CD8-positive, alpha-beta T cell (primary cell): ENCODE measurements at regions of chr2 and their contacts with region 1.

Region 1: GRCh38 chr2:106582148-106583143 is 95.3 kb downstream of the CD8B2 start:
- DNase-seq: peak; percentile 26 to 74 (median 60)
- ATAC-seq: peak; percentile 83
- H3K4me3 ChIP-seq: peak overlapping the region; percentile 54 to 57
- H3K4me3 Mint-ChIP-seq: peak overlapping the region; percentile 91
- H3K27ac ChIP-seq: no peak overlapping the region
- H3K27ac Mint-ChIP-seq: no peak overlapping the region
- H3K4me1 ChIP-seq: peaks cover 5% of the 10 kb centered on the region
- H3K4me1 Mint-ChIP-seq: peaks cover 15% of the 10 kb centered on the region
- H3K27me3 ChIP-seq: peaks cover 0 to 4% of the 10 kb centered on the region in 2 experiments
- H3K27me3 Mint-ChIP-seq: peaks cover 44% of the 10 kb centered on the region
- CTCF ChIP-seq: peak; percentile 93

Region 2: GRCh38 chr2:105294844-105295481 is 1287.5 kb before region 1 on chr2:
- CTCF ChIA-PET with region 1: no interaction called
- POLR2A ChIA-PET with region 1: no interaction called
- intact Hi-C with region 1: no loop called
- DNase-seq: peak in 3 of 9 experiments; percentile 25 to 27 (median 27)
- ATAC-seq: no peak
- H3K4me3 ChIP-seq: no peak overlapping the region
- H3K4me3 Mint-ChIP-seq: no peak overlapping the region
- H3K27ac ChIP-seq: no peak overlapping the region
- H3K27ac Mint-ChIP-seq: no peak overlapping the region
- H3K4me1 ChIP-seq: no peaks in the 10 kb centered on the region
- H3K4me1 Mint-ChIP-seq: peaks cover 1% of the 10 kb centered on the region
- H3K27me3 ChIP-seq: no peaks in the 10 kb centered on the region
- H3K27me3 Mint-ChIP-seq: no peaks in the 10 kb centered on the region
- CTCF ChIP-seq: no peak

Region 3: DNA sequence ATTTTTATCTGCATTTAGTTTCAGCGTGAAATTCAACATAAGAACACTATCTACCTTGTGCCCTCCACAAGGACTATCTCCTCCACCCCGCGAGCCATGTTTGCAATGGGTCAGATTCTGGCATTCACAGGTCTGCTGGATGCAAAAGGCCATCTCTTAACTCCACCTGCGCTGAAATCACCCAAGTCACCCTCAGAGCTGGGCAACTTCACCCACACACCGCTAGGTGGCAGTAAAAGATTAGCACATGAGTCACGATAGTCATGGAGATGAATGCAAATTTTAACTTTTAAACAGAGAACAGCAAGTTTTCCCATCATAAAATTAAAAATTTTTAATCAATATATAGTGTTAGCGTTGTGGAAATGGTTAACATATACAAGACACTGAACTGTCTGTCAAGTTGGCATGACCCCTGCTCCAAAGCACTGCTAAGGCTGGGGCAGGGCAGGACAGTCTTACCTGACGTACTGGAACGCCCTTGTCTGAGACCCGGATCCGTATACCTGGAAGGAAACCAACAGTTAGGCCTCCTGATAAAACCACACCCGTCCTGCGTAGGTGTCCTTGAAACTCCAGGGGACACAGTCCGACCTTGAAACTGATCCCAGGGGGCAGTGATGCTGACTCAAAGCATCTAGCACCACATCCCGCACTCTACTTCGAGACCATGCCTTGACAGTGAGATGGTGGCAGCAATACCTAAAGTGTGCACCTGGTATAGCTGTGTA is 477.9 kb before region 1 on chr2:
- CTCF ChIA-PET with region 1: no interaction called
- POLR2A ChIA-PET with region 1: no interaction called
- intact Hi-C with region 1: loop called (anchors 1 to 2 kb)
- DNase-seq: peak; percentile 35 to 82 (median 67)
- ATAC-seq: peak; percentile 78
- H3K4me3 ChIP-seq: no peak overlapping the region
- H3K4me3 Mint-ChIP-seq: no peak overlapping the region
- H3K27ac ChIP-seq: no peak overlapping the region
- H3K27ac Mint-ChIP-seq: peak overlapping the region; percentile 78
- H3K4me1 ChIP-seq: no peaks in the 10 kb centered on the region
- H3K4me1 Mint-ChIP-seq: peaks cover 21% of the 10 kb centered on the region
- H3K27me3 ChIP-seq: no peaks in the 10 kb centered on the region
- H3K27me3 Mint-ChIP-seq: no peaks in the 10 kb centered on the region
- CTCF ChIP-seq: peak; percentile 94

Region 4: DNA sequence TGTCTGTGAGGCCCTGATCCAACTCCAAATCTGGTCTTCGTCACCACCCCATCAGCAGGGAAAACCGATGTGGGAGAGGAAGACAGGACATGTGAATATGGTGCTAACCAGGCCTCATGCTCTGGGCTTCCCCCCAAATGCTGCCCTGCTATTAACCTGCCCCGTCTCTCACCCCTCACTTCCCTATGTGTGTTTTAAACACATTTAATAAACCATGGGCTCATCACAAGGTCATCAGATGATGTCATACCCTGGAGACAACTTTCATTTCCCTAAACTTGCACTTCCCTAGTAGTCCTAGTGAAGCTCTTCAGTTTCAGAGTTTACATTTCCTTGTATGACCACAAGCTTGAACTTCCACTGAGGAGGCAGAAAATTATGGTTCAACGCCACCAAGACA is 45.4 kb before region 1 on chr2:
- CTCF ChIA-PET with region 1: no interaction called
- POLR2A ChIA-PET with region 1: no interaction called
- intact Hi-C with region 1: no loop called
- DNase-seq: peak in 1 of 9 experiments; percentile 33
- ATAC-seq: no peak
- H3K4me3 ChIP-seq: no peak overlapping the region
- H3K4me3 Mint-ChIP-seq: no peak overlapping the region
- H3K27ac ChIP-seq: no peak overlapping the region
- H3K27ac Mint-ChIP-seq: no peak overlapping the region
- H3K4me1 ChIP-seq: no peaks in the 10 kb centered on the region
- H3K4me1 Mint-ChIP-seq: no peaks in the 10 kb centered on the region
- H3K27me3 ChIP-seq: no peaks in the 10 kb centered on the region
- H3K27me3 Mint-ChIP-seq: peaks cover 4% of the 10 kb centered on the region
- CTCF ChIP-seq: no peak

Region 5: DNA sequence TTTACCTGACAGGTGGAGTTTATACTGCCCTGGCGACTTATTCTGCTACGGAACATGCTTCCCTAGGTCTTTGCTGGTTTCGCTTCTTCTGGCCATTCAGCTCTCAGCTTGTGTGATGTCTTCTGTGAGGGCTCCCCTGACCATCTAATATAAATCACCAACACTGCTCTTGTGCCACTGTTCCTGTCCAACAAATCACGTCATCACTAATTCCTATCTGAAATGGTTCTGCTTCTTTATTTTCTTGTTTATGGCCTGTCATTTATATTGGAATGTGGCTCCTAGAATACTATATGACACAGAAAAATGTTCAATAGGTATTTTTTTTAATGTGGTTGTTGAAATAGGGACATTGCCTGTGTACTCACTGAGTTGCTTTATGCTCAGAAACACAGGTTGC is 76.2 kb after region 1 on chr2:
- CTCF ChIA-PET with region 1: no interaction called
- POLR2A ChIA-PET with region 1: no interaction called
- intact Hi-C with region 1: no loop called
- DNase-seq: no peak
- ATAC-seq: no peak
- H3K4me3 ChIP-seq: no peak overlapping the region
- H3K4me3 Mint-ChIP-seq: no peak overlapping the region
- H3K27ac ChIP-seq: no peak overlapping the region
- H3K27ac Mint-ChIP-seq: no peak overlapping the region
- H3K4me1 ChIP-seq: no peaks in the 10 kb centered on the region
- H3K4me1 Mint-ChIP-seq: no peaks in the 10 kb centered on the region
- H3K27me3 ChIP-seq: no peaks in the 10 kb centered on the region
- H3K27me3 Mint-ChIP-seq: peaks cover 17% of the 10 kb centered on the region
- CTCF ChIP-seq: no peak

Region 6: GRCh38 chr2:107393516-107393915 is 811.1 kb after region 1 on chr2:
- CTCF ChIA-PET with region 1: no interaction called
- POLR2A ChIA-PET with region 1: no interaction called
- intact Hi-C with region 1: no loop called
- DNase-seq: no peak
- ATAC-seq: no peak
- H3K4me3 ChIP-seq: no peak overlapping the region
- H3K4me3 Mint-ChIP-seq: no peak overlapping the region
- H3K27ac ChIP-seq: no peak overlapping the region
- H3K27ac Mint-ChIP-seq: no peak overlapping the region
- H3K4me1 ChIP-seq: no peaks in the 10 kb centered on the region
- H3K4me1 Mint-ChIP-seq: no peaks in the 10 kb centered on the region
- H3K27me3 ChIP-seq: no peaks in the 10 kb centered on the region
- H3K27me3 Mint-ChIP-seq: no peaks in the 10 kb centered on the region
- CTCF ChIP-seq: no peak